Activated T-helper 2 cell treated with anti-CD3 and anti-CD28 coated beads, Interferon-gamma antibody, Interleukin-2, Interleukin-4, amounts not matched to agents 10 μg/mL and 5 μg/mL and 100 μg/mL, durations not matched to agents 14 hours and 24 hours and 36 hours (primary cell): ENCODE measurements at regions of chr15 and their contacts with region 1.

Region 1: GRCh38 chr15:90165659-90166421 is 35.3 kb upstream of the SEMA4B start:
- DNase-seq: peak; percentile 16
- H3K4me3 Mint-ChIP-seq: no peak overlapping the region
- H3K27ac Mint-ChIP-seq: peak overlapping the region; percentile 77
- H3K4me1 Mint-ChIP-seq: peaks cover 29% of the 10 kb centered on the region
- H3K27me3 Mint-ChIP-seq: no peaks in the 10 kb centered on the region

Region 2: DNA sequence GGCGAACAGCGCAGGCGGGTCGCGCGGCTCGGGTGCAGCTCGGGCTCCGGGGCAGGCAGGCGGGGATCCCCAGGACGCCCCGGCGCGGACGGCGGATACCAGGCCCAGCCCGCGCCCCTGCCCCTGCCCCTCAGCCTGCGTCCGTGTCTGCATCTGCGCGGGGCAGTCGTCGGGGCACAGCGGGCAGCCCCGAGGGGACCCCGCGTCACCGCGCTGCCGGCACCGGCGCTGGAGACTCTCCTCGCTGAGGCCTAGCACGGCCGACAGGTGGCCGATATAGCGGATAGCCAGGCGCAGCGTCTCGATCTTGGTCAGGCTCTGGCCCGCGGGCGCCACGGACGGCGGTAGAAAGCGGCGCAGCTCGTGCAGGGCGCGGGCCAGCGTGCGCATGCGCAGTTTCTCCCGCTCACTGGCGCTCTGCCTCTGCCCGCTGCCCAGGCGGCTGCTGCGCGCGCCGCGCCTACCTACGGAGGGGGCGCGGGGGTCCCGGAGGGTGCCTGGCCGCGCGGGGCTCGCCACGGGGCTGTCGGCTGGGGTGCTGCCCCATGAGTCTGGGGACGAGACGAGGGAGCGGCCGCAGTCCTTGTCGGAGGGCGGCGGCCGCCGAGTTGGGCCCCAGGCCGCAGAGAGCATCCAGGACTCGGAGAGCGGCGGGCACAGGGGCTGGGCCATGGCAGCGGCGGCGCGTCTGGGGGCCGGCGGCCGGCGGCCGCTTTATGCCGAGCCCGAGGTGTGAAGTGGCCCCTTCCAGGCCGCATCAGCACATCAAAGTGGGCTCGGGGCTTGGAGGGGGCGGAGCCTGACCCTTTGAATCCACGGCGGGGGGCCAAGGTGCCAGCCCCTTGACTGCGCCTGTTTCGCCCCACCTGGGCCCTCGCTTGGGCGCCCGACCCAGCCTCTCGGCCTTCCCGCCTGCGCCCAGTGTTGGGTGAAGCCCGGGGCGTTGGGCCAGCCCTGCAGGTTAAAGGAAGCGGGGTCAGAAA is 415.0 kb before region 1 on chr15 and contains the start of gene MESP1:
- intact Hi-C with region 1: no loop called
- DNase-seq: peak; percentile 83
- H3K4me3 Mint-ChIP-seq: peak within 1 kb of the TSS; percentile 81
- H3K27ac Mint-ChIP-seq: no peak within 1 kb of the TSS
- H3K4me1 Mint-ChIP-seq: peaks cover 3% of the 10 kb centered on the region
- H3K27me3 Mint-ChIP-seq: peaks cover 33% of the 10 kb centered on the region
- total RNA-seq, gene MESP1: 7.1 and 7.5 TPM in 2 replicates

Region 3: GRCh38 chr15:89864957-89865739 is 300.7 kb before region 1 on chr15:
- intact Hi-C with region 1: no loop called
- DNase-seq: no peak
- H3K4me3 Mint-ChIP-seq: no peak overlapping the region
- H3K27ac Mint-ChIP-seq: no peak overlapping the region
- H3K4me1 Mint-ChIP-seq: peaks cover 8% of the 10 kb centered on the region
- H3K27me3 Mint-ChIP-seq: no peaks in the 10 kb centered on the region

Region 4: DNA sequence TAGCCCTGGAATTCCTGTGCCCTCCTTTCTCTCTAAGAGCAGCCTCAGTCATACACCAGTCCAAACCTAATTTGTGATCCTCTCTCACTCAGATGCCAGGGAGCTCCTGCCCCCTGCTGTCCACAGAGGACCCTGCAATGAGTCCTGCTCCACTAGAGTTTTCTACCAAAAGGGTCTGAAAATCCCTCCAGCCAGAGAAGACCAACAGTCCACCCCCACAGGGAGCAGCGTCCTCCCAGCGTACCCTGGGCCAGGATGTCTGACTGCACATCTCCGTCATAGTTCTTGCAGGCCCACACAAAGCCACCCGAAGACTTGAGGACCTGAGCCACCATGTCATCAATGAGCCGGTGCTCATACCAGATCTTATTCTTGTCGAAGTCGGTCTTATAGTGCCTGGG is 79.0 kb before region 1 on chr15:
- intact Hi-C with region 1: no loop called
- DNase-seq: no peak
- H3K4me3 Mint-ChIP-seq: no peak overlapping the region
- H3K27ac Mint-ChIP-seq: no peak overlapping the region
- H3K4me1 Mint-ChIP-seq: peaks cover 9% of the 10 kb centered on the region
- H3K27me3 Mint-ChIP-seq: no peaks in the 10 kb centered on the region

Region 5: GRCh38 chr15:90154861-90155626 is 10.8 kb before region 1 on chr15:
- intact Hi-C with region 1: no loop called
- DNase-seq: no peak
- H3K4me3 Mint-ChIP-seq: no peak overlapping the region
- H3K27ac Mint-ChIP-seq: no peak overlapping the region
- H3K4me1 Mint-ChIP-seq: peaks cover 22% of the 10 kb centered on the region
- H3K27me3 Mint-ChIP-seq: no peaks in the 10 kb centered on the region

Region 6: GRCh38 chr15:90184786-90185569 is 19.1 kb after region 1 on chr15:
- intact Hi-C with region 1: loop called (anchors 1 kb)
- DNase-seq: peak; percentile 46
- H3K4me3 Mint-ChIP-seq: peak overlapping the region; percentile 86
- H3K27ac Mint-ChIP-seq: peak overlapping the region; percentile 68
- H3K4me1 Mint-ChIP-seq: peaks cover 23% of the 10 kb centered on the region
- H3K27me3 Mint-ChIP-seq: no peaks in the 10 kb centered on the region

Region 7: DNA sequence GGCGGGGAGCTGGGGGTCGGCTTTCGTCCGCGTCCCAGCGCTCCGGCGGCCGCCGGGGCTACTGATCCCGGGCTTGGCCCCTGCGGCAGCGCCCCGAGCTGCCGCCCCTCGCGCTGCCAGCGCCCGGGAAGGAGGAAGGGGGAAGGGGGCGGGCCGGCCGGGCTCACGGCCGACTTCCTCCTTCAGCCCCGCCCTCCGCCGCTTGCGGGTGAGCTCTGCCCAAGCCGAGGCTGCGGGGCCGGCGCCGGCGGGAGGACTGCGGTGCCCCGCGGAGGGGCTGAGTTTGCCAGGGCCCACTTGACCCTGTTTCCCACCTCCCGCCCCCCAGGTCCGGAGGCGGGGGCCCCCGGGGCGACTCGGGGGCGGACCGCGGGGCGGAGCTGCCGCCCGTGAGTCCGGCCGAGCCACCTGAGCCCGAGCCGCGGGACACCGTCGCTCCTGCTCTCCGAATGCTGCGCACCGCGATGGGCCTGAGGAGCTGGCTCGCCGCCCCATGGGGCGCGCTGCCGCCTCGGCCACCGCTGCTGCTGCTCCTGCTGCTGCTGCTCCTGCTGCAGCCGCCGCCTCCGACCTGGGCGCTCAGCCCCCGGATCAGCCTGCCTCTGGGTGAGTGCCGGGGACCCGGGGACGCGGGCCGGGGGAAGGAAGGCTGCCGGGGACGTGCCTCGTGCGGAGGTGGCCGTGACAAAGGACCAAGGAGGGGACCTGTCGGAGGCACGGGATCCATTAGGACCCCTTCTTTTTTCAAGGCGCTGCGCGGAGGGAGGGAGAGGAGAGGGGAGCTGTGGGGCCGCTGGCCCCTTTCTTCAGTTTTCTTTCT is 35.5 kb after region 1 on chr15 and contains the start of gene SEMA4B:
- intact Hi-C with region 1: loop called (anchors 5 kb)
- DNase-seq: peak; percentile 72
- H3K4me3 Mint-ChIP-seq: peak within 1 kb of the TSS; percentile 83
- H3K27ac Mint-ChIP-seq: peak within 1 kb of the TSS; percentile 67
- H3K4me1 Mint-ChIP-seq: peaks cover 27% of the 10 kb centered on the region
- H3K27me3 Mint-ChIP-seq: no peaks in the 10 kb centered on the region
- total RNA-seq, gene SEMA4B: 28.3 and 30.2 TPM in 2 replicates